Naive thymus-derived CD8-positive, alpha-beta T cell (primary cell): ENCODE measurements at regions of chr17 and their contacts with region 1.

Region 1: DNA sequence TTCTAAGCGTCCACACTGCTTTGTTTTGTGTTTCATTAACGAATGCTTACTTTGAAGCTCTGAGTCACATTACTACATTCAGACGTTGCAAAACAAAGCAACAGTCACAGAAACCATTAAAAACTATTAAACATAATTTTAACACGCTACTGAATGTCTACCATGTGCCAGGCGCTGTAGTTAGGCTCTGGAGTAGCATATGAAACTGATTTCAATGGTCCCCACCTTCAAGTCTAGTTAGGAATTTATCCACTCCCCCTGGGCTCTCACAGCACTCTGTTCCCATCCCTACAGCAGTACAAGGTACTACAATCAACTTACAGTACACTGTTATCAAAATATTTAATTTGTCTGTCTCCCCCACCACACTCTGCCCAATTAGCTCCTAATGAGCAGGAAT is 631 bp downstream of the UTP6 start:
- DNase-seq: no peak
- ATAC-seq: no peak
- H3K4me3 Mint-ChIP-seq: no peak overlapping the region
- H3K27ac Mint-ChIP-seq: no peak overlapping the region
- H3K4me1 Mint-ChIP-seq: peaks cover 0 to 27% (median 8%) of the 10 kb centered on the region in 4 donors
- H3K27me3 Mint-ChIP-seq: no peaks in the 10 kb centered on the region

Region 2: GRCh38 chr17:31919802-31920525 is 19.1 kb after region 1 on chr17:
- POLR2A ChIA-PET with region 1: no interaction called
- DNase-seq: no peak
- ATAC-seq: no peak
- H3K4me3 Mint-ChIP-seq: no peak overlapping the region
- H3K27ac Mint-ChIP-seq: no peak overlapping the region
- H3K4me1 Mint-ChIP-seq: peaks cover 0 to 2% (median 1%) of the 10 kb centered on the region in 4 donors
- H3K27me3 Mint-ChIP-seq: peaks cover 7 to 42% (median 28%) of the 10 kb centered on the region in 5 donors

Region 3: DNA sequence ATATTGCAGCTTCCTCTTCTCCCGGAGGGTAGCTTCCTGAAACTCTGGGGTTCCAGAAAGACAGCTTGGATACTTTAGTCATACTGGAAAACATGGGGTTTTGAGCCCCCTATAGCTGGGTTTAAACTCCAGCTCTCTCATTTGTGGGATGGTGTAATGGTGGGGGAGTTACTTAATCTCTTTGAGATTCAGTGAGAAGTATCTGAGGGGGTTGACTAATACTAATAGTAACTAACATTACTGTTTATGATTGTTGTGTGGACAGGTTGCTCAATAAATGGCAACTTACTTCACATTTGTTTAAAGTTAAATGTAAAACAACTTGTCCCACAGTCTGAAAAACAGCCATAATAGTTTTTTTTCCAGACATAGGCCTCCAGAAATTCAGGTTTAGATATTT is 30.9 kb after region 1 on chr17:
- POLR2A ChIA-PET with region 1: interaction called, 12 read pairs
- DNase-seq: no peak
- ATAC-seq: no peak
- H3K4me3 Mint-ChIP-seq: no peak overlapping the region
- H3K27ac Mint-ChIP-seq: no peak overlapping the region
- H3K4me1 Mint-ChIP-seq: peaks cover 0 to 2% (median 0%) of the 10 kb centered on the region in 4 donors
- H3K27me3 Mint-ChIP-seq: no peaks in the 10 kb centered on the region